Dorsolateral prefrontal cortex (tissue), 120 donors: ENCODE measurements at regions of chr2 and their contacts with region 1.

Region 1: GRCh38 chr2:199471443-199472057 is 13.8 kb upstream of the SATB2 start:
- DNase-seq: peak in 8 of 10 donors; percentile 60 to 84 (median 74)
- H3K4me3 ChIP-seq: peak overlapping the region; percentile 27 to 68 (median 50)
- H3K27ac ChIP-seq: peak overlapping the region in 55 of 59 donors; percentile 17 to 96 (median 76)
- H3K27me3 ChIP-seq: peaks cover 0 to 97% (median 57%) of the 10 kb centered on the region in 45 donors
- CTCF ChIP-seq: peak; percentile 26 to 85 (median 72)

Region 2: GRCh38 chr2:199581935-199582360 is 110.4 kb after region 1 on chr2:
- intact Hi-C with region 1: loop called in 1 of 2 experiments (anchors 10 kb)
- DNase-seq: no peak
- H3K4me3 ChIP-seq: peak overlapping the region; percentile 5 to 73 (median 52)
- H3K27ac ChIP-seq: peak overlapping the region in 23 of 59 donors; percentile 0 to 78 (median 38)
- H3K27me3 ChIP-seq: peaks cover 0 to 3% (median 0%) of the 10 kb centered on the region in 45 donors
- CTCF ChIP-seq: no peak